Calu3 (cell line): ENCODE measurements at regions of chr1 and their contacts with region 1.

Region 1: GRCh38 chr1:197268012-197268411 is at the start of gene CRB1:
- DNase-seq: no peak
- H3K4me3 Mint-ChIP-seq: no peak within 1 kb of the TSS
- H3K27ac Mint-ChIP-seq: no peak within 1 kb of the TSS
- H3K4me1 Mint-ChIP-seq: peaks cover 8% of the 10 kb centered on the region
- H3K27me3 Mint-ChIP-seq: no peaks in the 10 kb centered on the region
- CTCF ChIP-seq: no peak
- total RNA-seq, gene CRB1: not detected in 2 replicates

Region 2: GRCh38 chr1:197314682-197315081 is 46.7 kb after region 1 on chr1:
- CTCF ChIA-PET with region 1: no interaction called
- intact Hi-C with region 1: loop called (anchors 5 kb)
- DNase-seq: no peak
- H3K4me3 Mint-ChIP-seq: no peak overlapping the region
- H3K27ac Mint-ChIP-seq: no peak overlapping the region
- H3K4me1 Mint-ChIP-seq: peaks cover 22% of the 10 kb centered on the region
- H3K27me3 Mint-ChIP-seq: no peaks in the 10 kb centered on the region
- CTCF ChIP-seq: no peak

Region 3: DNA sequence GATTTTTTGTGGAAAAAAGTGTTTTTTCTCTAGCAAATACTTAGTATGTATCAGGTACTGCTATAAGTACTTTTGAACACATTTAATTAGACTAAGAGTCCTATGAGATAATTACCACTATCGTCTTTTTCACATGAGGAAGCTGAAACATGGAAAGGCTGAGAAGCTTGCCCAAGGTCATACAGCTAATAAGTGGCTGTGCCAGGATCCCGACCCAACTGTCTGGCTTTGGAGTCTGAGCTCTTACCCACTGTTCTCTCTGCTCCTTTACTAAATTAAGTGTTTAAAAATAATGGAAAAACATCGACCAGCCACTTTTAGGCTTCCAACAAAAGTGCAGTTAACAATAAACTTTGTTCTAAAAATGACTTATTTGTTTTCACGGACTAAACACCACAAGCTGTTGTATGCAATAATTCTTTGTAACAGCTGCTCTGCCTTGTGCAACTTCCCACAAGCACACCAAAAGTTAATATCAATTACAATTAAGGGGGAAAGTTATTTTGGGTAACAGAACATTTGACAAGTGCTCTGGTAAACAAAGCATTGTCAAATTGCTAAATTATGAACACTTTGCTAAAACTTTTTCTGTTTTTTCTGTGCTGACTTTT is 75.8 kb after region 1 on chr1:
- CTCF ChIA-PET with region 1: no interaction called
- intact Hi-C with region 1: no loop called
- DNase-seq: no peak
- H3K4me3 Mint-ChIP-seq: no peak overlapping the region
- H3K27ac Mint-ChIP-seq: no peak overlapping the region
- H3K4me1 Mint-ChIP-seq: no peaks in the 10 kb centered on the region
- H3K27me3 Mint-ChIP-seq: no peaks in the 10 kb centered on the region
- CTCF ChIP-seq: no peak